Calu3 (cell line): ENCODE measurements at regions of chr1 and their contacts with region 1.

Region 1: GRCh38 chr1:56709269-56709880 is 64.3 kb downstream of the PRKAA2 start:
- DNase-seq: peak; percentile 22
- H3K4me3 Mint-ChIP-seq: no peak overlapping the region
- H3K27ac Mint-ChIP-seq: no peak overlapping the region
- H3K4me1 Mint-ChIP-seq: no peaks in the 10 kb centered on the region
- H3K27me3 Mint-ChIP-seq: no peaks in the 10 kb centered on the region
- CTCF ChIP-seq: peak; percentile 47

Region 2: DNA sequence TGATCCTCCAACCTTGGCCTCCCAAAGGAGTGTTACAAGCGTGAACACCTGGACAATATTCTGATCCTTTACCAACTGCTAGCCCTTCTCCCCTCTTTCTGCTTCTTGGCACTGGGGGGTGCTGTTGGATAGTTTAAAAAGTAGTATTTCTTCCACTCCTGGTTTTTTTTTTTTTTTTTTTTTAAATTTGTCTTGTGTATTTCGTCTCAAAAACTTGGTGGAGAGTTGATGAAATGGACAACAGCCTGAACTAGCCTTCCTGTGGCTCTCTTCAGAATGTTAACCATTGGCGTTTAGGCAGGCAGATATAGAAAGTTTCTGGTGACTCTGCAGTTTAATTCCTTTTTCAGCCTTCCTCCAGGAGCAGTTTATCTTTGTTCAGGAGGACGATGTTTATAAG is 1424.5 kb before region 1 on chr1:
- CTCF ChIA-PET with region 1: no interaction called
- intact Hi-C with region 1: loop called (anchors 2 kb)
- DNase-seq: peak; percentile 55
- H3K4me3 Mint-ChIP-seq: no peak overlapping the region
- H3K27ac Mint-ChIP-seq: no peak overlapping the region
- H3K4me1 Mint-ChIP-seq: peaks cover 13% of the 10 kb centered on the region
- H3K27me3 Mint-ChIP-seq: no peaks in the 10 kb centered on the region
- CTCF ChIP-seq: peak; percentile 70

Region 3: DNA sequence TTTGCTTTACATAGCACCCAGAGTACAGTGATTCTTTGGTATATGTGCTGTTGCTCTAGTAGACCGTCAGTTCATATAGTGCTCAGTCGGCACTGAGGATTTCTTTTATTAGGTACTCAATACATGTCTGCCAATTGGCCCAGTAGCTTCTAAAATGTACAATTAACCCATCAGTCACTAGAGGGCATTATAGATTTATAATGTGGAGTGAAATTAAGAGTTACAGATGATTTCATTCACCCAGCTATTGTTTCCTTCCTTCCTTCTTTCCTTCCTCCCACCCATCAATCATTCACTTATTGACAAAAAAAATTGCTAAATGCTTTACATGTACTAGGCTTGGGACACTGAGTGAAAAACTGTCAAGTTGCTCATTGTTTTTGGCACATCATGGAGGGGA is 1230.6 kb before region 1 on chr1:
- CTCF ChIA-PET with region 1: no interaction called
- intact Hi-C with region 1: loop called (anchors 1 kb)
- DNase-seq: no peak
- H3K4me3 Mint-ChIP-seq: no peak overlapping the region
- H3K27ac Mint-ChIP-seq: no peak overlapping the region
- H3K4me1 Mint-ChIP-seq: peaks cover 43% of the 10 kb centered on the region
- H3K27me3 Mint-ChIP-seq: no peaks in the 10 kb centered on the region
- CTCF ChIP-seq: no peak

Region 4: GRCh38 chr1:55868026-55868425 is 841.3 kb before region 1 on chr1:
- CTCF ChIA-PET with region 1: no interaction called
- intact Hi-C with region 1: loop called (anchors 10 kb)
- DNase-seq: no peak
- H3K4me3 Mint-ChIP-seq: no peak overlapping the region
- H3K27ac Mint-ChIP-seq: no peak overlapping the region
- H3K4me1 Mint-ChIP-seq: no peaks in the 10 kb centered on the region
- H3K27me3 Mint-ChIP-seq: no peaks in the 10 kb centered on the region
- CTCF ChIP-seq: no peak

Region 5: GRCh38 chr1:56409094-56409691 is 300.2 kb before region 1 on chr1:
- CTCF ChIA-PET with region 1: no interaction called
- intact Hi-C with region 1: loop called (anchors 10 kb)
- DNase-seq: peak; percentile 76
- H3K4me3 Mint-ChIP-seq: no peak overlapping the region
- H3K27ac Mint-ChIP-seq: no peak overlapping the region
- H3K4me1 Mint-ChIP-seq: peaks cover 19% of the 10 kb centered on the region
- H3K27me3 Mint-ChIP-seq: no peaks in the 10 kb centered on the region
- CTCF ChIP-seq: peak; percentile 68

Region 6: DNA sequence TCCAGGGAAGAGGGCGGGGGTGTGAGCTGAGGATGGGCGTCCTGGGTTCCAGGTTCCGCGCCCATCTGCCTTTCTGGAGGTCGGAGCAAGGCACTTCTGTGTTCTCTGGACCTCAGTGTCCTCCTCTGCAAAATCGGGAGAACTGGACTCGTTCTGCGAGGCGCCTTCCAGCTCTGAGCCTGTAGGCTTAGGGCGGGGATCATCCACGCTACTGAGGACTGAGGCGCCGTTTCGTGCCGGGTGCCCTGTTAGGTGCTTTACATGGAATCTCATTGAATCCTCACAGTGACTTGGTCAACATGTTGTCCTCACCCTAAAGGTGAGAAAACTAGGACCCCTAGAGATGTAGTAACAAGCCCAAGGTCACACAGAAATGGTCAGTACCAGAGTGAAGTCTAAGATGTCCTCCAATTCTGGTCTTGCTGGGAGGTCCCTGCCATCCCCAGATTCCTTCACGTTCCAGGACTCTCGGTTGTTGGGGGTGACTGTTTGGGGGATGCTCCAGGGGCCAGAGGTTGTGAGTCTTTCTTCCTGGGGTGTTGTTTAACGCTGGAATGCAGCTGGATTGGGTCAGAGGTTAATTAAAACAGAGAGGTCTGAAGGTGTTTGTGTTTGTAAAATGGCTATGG is 63.6 kb before region 1 on chr1:
- CTCF ChIA-PET with region 1: no interaction called
- intact Hi-C with region 1: loop called (anchors 2 kb)
- DNase-seq: no peak
- H3K4me3 Mint-ChIP-seq: peak overlapping the region; percentile 78
- H3K27ac Mint-ChIP-seq: peak overlapping the region; percentile 91
- H3K4me1 Mint-ChIP-seq: peaks cover 25% of the 10 kb centered on the region
- H3K27me3 Mint-ChIP-seq: no peaks in the 10 kb centered on the region
- CTCF ChIP-seq: no peak

Region 7: GRCh38 chr1:56803561-56804156 is 94.3 kb after region 1 on chr1:
- CTCF ChIA-PET with region 1: interaction called, 3 read pairs
- intact Hi-C with region 1: loop called (anchors 5 kb)
- DNase-seq: peak; percentile 74
- H3K4me3 Mint-ChIP-seq: no peak overlapping the region
- H3K27ac Mint-ChIP-seq: no peak overlapping the region
- H3K4me1 Mint-ChIP-seq: no peaks in the 10 kb centered on the region
- H3K27me3 Mint-ChIP-seq: peaks cover under 1% of the 10 kb centered on the region
- CTCF ChIP-seq: peak; percentile 62